ENCODE measurements at regions of chr14 and their contacts with region 1.

Region 1: DNA sequence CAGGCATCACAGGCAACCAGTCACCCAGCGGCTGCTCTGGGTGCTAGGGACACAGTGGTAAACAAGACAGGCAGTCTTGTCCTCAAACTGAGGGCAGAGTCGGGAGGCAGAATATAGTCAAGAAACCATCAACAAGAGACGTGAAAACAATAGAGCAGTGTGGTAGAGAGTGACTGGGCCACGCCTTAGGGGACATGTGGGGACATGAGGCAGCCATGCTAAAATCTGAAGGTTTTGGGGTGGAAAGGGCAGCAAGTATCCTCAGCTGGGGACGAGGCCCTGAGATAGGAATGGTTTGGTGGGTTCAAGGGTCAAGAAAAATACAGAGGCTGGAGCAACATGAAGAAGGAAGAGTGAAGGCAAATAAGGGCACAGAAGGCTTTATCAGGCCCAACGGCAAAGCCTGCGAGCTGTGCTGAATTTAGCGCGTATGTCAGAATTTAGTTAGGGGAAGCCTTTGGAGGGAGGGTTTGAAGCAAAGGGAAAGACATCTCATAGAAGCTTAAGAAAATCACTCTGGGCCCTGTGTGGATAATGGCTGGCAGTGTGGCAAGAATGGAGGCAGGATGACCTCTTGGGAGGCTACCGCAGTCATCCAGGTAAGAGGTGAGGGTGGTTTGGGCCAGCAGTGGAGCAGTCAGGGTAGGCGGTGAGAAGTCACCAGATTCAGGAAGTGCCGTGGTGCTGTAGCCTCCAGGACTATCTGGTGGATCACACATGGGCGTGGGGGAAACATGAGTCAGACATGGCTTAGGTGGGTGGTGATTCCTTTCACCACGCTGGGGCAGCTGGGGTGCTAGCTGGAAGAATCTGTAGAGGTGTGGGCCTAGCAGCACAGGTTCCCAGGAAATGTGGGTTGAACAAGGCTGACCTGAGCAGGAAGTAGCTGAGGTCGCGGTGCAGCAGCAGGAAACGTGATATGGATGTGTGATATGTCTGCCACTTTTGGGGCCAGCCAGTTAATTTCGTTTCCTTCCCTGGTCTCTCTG is 3.0 kb downstream of the EVL start:
- DNase-seq: peak; percentile 90 to 99 (median 94)
- H3K4me3 ChIP-seq: peak overlapping the region; percentile 73 to 100
- H3K4me3 Mint-ChIP-seq: peak overlapping the region; percentile 92 to 100 (median 97)
- H3K27ac ChIP-seq: peak overlapping the region; percentile 81
- H3K27ac Mint-ChIP-seq: peak overlapping the region; percentile 95 to 100 (median 100)
- H3K4me1 ChIP-seq: peaks cover 69% of the 10 kb centered on the region
- H3K4me1 Mint-ChIP-seq: peaks cover 43 to 95% (median 60%) of the 10 kb centered on the region in 4 donors
- H3K27me3 ChIP-seq: no peaks in the 10 kb centered on the region
- H3K27me3 Mint-ChIP-seq: no peaks in the 10 kb centered on the region

Region 2: GRCh38 chr14:99654235-99654966 is 413.9 kb before region 1 on chr14:
- CTCF ChIA-PET with region 1: no interaction called
- POLR2A ChIA-PET with region 1: no interaction called
- intact Hi-C with region 1: no loop called
- DNase-seq: no peak
- H3K4me3 ChIP-seq: no peak overlapping the region
- H3K4me3 Mint-ChIP-seq: no peak overlapping the region
- H3K27ac ChIP-seq: no peak overlapping the region
- H3K27ac Mint-ChIP-seq: no peak overlapping the region
- H3K4me1 ChIP-seq: no peaks in the 10 kb centered on the region
- H3K4me1 Mint-ChIP-seq: peaks cover 0 to 5% (median 2%) of the 10 kb centered on the region in 4 donors
- H3K27me3 ChIP-seq: peaks cover 11% of the 10 kb centered on the region
- H3K27me3 Mint-ChIP-seq: peaks cover 30 to 41% of the 10 kb centered on the region in 2 donors

Region 3: DNA sequence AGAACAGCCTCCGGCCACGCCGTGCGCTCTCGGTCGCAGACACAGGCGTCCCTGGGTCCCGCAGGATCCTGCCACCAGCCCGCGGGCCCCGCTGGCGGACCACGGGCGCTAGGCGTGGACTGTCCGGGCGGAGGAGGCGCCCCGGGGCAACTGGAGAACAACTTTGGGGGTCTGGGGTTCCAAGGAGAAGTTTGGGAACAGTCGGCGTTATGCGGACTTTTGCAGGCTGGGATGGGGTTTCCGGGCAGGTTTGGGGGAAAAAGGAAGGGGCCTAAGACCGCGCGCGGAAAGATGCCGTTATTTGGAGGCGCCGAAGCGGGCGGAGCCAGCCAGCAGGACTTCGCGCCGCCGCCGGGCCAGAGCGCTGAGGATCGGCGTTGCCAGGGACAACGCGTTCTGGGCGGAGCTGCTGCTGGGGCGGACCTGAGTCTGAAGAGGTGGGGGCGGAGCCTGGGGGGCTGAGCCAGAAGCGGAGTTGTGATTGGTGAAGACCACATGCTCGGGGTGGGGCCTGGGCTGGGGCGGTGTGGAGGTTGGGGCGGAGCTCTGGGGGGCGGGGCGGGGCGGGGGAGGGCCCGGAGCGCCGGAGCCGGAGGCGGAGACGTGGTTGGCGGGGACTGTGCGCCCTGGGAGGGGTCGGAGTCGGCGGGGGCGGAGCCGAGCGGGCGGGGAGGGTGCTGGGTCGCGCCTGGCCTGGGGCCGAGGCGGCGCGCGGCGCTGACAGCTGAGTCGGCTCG is 384.5 kb before region 1 on chr14 and contains the start of gene CYP46A1:
- CTCF ChIA-PET with region 1: no interaction called
- POLR2A ChIA-PET with region 1: no interaction called
- intact Hi-C with region 1: loop called (anchors 5 kb)
- DNase-seq: peak; percentile 98 to 100 (median 99)
- H3K4me3 ChIP-seq: peak within 1 kb of the TSS; percentile 86 to 92
- H3K4me3 Mint-ChIP-seq: peak within 1 kb of the TSS; percentile 86 to 97 (median 94)
- H3K27ac ChIP-seq: peak within 1 kb of the TSS; percentile 71
- H3K27ac Mint-ChIP-seq: peak within 1 kb of the TSS; percentile 92 to 96 (median 93)
- H3K4me1 ChIP-seq: peaks cover 19% of the 10 kb centered on the region
- H3K4me1 Mint-ChIP-seq: peaks cover 4 to 19% (median 12%) of the 10 kb centered on the region in 4 donors
- H3K27me3 ChIP-seq: no peaks in the 10 kb centered on the region
- H3K27me3 Mint-ChIP-seq: peaks cover 3 to 6% of the 10 kb centered on the region in 2 donors
- total RNA-seq, gene CYP46A1: 0.15 to 0.36 TPM

Region 4: DNA sequence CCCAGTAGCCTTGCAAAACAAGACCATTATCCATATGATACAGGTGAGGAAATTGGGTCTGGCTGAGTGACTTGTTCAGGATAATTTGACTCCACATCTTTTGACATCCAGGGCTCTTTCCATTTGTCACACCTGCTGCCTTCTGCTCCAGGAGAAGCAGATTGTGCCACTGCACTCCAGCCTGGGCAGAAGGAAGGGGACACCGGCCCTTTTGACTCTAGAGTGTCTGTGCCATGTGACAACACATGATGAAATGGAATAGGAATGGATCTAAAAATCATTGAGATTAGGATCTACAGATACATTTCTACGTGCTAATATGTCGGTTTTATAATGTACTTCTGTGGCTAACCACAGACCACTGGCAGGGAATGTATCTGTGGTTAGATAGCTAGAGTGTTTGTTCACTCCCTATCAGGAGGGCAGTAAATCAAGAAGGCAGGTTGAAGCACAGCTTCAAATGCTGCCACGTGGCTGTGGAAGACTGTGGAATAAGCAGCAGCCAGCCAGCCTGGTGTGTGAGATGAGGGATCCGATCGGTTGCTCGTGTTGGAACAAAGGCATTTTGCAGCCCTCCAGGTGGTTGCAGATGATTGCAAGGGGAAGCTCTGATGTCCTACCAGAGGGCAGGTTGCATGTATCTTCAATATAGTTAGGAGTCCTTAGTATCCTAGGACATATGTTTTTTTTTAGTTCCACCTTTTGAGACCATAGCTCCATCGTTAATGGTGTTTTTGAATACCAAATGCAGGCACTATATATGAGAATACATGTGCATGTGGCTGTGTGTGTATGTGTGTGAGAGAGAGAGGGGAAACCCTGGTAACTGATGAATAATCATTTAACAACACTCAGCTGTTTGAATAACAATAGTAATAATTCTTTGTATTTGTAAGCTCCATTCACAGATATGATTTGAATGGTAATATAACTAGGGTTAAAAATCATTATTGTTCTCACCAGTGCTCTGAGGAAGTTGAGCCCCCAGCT is 246.5 kb before region 1 on chr14:
- CTCF ChIA-PET with region 1: no interaction called
- POLR2A ChIA-PET with region 1: no interaction called
- intact Hi-C with region 1: no loop called
- DNase-seq: peak in 4 of 5 donors; percentile 5 to 20 (median 12)
- H3K4me3 ChIP-seq: no peak overlapping the region
- H3K4me3 Mint-ChIP-seq: peak overlapping the region in 5 of 8 donors; percentile 1 to 75 (median 10)
- H3K27ac ChIP-seq: no peak overlapping the region
- H3K27ac Mint-ChIP-seq: peak overlapping the region in 1 of 7 donors; percentile 50
- H3K4me1 ChIP-seq: peaks cover 19% of the 10 kb centered on the region
- H3K4me1 Mint-ChIP-seq: peaks cover 13 to 34% (median 27%) of the 10 kb centered on the region in 4 donors
- H3K27me3 ChIP-seq: peaks cover 17% of the 10 kb centered on the region
- H3K27me3 Mint-ChIP-seq: peaks cover 12 to 31% of the 10 kb centered on the region in 2 donors

Region 5: DNA sequence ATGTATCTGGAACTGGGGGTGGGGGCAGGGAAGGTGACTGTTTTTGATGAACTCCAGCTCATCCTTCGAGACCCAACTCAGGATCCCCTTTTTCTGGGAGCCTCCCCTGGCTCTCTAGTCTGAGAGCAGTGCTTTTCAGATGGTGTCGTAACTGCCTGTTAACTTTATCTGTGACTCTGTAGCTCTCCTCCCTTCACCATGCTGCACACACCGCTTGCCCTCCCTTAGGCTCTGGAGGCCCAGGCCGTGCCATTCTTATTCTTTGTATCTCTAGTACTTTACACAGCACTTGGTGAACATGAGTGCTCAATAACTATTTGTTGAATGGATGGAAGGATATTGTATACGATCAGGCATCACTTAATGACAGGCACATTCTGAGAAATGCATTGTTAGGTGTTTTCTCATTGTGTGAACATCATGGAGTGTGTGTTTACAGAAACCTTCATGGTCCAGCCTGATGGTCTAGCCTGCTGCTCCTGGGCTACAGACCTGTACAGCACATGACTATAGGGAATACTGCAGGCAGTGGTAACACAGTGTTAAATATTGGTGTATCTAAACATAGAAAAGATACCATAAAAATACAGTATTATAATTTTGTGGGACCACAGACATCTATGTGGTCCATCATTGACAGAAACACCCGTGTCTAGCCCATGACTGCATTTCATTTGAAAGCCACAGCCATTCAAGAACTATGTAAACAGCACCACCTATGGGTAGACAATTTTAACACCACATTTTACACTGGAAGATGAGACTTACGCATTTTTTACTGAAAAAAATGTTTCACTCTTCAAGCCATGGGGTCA is 183.2 kb before region 1 on chr14:
- CTCF ChIA-PET with region 1: no interaction called
- POLR2A ChIA-PET with region 1: no interaction called
- intact Hi-C with region 1: no loop called
- DNase-seq: peak; percentile 41 to 64 (median 58)
- H3K4me3 ChIP-seq: no peak overlapping the region
- H3K4me3 Mint-ChIP-seq: no peak overlapping the region
- H3K27ac ChIP-seq: no peak overlapping the region
- H3K27ac Mint-ChIP-seq: no peak overlapping the region
- H3K4me1 ChIP-seq: no peaks in the 10 kb centered on the region
- H3K4me1 Mint-ChIP-seq: no peaks in the 10 kb centered on the region
- H3K27me3 ChIP-seq: peaks cover 4% of the 10 kb centered on the region
- H3K27me3 Mint-ChIP-seq: peaks cover 12 to 13% of the 10 kb centered on the region in 2 donors

Region 6: DNA sequence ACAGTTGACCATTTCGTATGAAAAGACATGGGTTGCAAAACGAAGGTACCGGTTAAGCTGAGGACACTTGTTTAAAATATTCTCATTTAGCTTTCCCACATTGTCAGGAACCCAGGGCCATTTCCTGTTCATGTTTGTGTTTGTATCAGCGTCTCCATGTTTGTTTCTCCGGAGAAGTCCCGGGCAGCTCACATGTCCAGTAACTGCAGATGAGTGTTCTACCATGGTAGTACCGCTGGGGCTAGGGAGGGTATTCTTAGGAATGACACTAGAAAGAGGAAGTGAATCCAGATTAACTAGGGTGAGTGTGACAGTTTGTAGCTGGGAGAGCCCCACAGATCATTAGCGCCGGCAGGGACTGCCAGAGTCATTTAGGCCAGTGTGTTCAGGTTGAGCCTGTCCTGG is 53.0 kb before region 1 on chr14:
- CTCF ChIA-PET with region 1: no interaction called
- POLR2A ChIA-PET with region 1: no interaction called
- intact Hi-C with region 1: no loop called
- DNase-seq: no peak
- H3K4me3 ChIP-seq: no peak overlapping the region
- H3K4me3 Mint-ChIP-seq: no peak overlapping the region
- H3K27ac ChIP-seq: no peak overlapping the region
- H3K27ac Mint-ChIP-seq: no peak overlapping the region
- H3K4me1 ChIP-seq: no peaks in the 10 kb centered on the region
- H3K4me1 Mint-ChIP-seq: peaks cover 0 to 7% (median 3%) of the 10 kb centered on the region in 4 donors
- H3K27me3 ChIP-seq: no peaks in the 10 kb centered on the region
- H3K27me3 Mint-ChIP-seq: no peaks in the 10 kb centered on the region

Region 7: GRCh38 chr14:100078991-100079725 is 10.9 kb after region 1 on chr14:
- CTCF ChIA-PET with region 1: interaction called, 1,350 read pairs
- POLR2A ChIA-PET with region 1: interaction called, 1,011 read pairs
- intact Hi-C with region 1: loop called (anchors 1 kb)
- DNase-seq: peak; percentile 87 to 96 (median 88)
- H3K4me3 ChIP-seq: peak overlapping the region; percentile 41 to 52
- H3K4me3 Mint-ChIP-seq: peak overlapping the region; percentile 83 to 88 (median 86)
- H3K27ac ChIP-seq: peak overlapping the region; percentile 62
- H3K27ac Mint-ChIP-seq: peak overlapping the region; percentile 91 to 99 (median 95)
- H3K4me1 ChIP-seq: peaks cover 100% of the 10 kb centered on the region
- H3K4me1 Mint-ChIP-seq: peaks cover 81 to 100% (median 92%) of the 10 kb centered on the region in 4 donors
- H3K27me3 ChIP-seq: no peaks in the 10 kb centered on the region
- H3K27me3 Mint-ChIP-seq: no peaks in the 10 kb centered on the region

Region 8: GRCh38 chr14:100147181-100147631 is 78.9 kb after region 1 on chr14:
- CTCF ChIA-PET with region 1: interaction called, 3 read pairs
- POLR2A ChIA-PET with region 1: interaction called, 51 read pairs
- intact Hi-C with region 1: no loop called
- DNase-seq: peak; percentile 61 to 82 (median 73)
- H3K4me3 ChIP-seq: no peak overlapping the region
- H3K4me3 Mint-ChIP-seq: peak overlapping the region; percentile 54 to 79 (median 74)
- H3K27ac ChIP-seq: no peak overlapping the region
- H3K27ac Mint-ChIP-seq: peak overlapping the region; percentile 73 to 96 (median 88)
- H3K4me1 ChIP-seq: peaks cover 28% of the 10 kb centered on the region
- H3K4me1 Mint-ChIP-seq: peaks cover 7 to 36% (median 20%) of the 10 kb centered on the region in 4 donors
- H3K27me3 ChIP-seq: no peaks in the 10 kb centered on the region
- H3K27me3 Mint-ChIP-seq: no peaks in the 10 kb centered on the region

Region 9: GRCh38 chr14:100239840-100240724 is 171.8 kb after region 1 on chr14:
- CTCF ChIA-PET with region 1: interaction called, 4 read pairs
- POLR2A ChIA-PET with region 1: interaction called, 85 read pairs
- intact Hi-C with region 1: loop called (anchors 2 kb)
- DNase-seq: peak; percentile 86 to 91 (median 88)
- H3K4me3 ChIP-seq: peak overlapping the region; percentile 42 to 92
- H3K4me3 Mint-ChIP-seq: peak overlapping the region; percentile 86 to 96 (median 92)
- H3K27ac ChIP-seq: peak overlapping the region; percentile 84
- H3K27ac Mint-ChIP-seq: peak overlapping the region; percentile 95 to 98 (median 96)
- H3K4me1 ChIP-seq: peaks cover 67% of the 10 kb centered on the region
- H3K4me1 Mint-ChIP-seq: peaks cover 37 to 65% (median 48%) of the 10 kb centered on the region in 4 donors
- H3K27me3 ChIP-seq: no peaks in the 10 kb centered on the region
- H3K27me3 Mint-ChIP-seq: no peaks in the 10 kb centered on the region